Mammary epithelial cell (primary cell): ENCODE measurements at regions of chr3 and their contacts with region 1.

Region 1: DNA sequence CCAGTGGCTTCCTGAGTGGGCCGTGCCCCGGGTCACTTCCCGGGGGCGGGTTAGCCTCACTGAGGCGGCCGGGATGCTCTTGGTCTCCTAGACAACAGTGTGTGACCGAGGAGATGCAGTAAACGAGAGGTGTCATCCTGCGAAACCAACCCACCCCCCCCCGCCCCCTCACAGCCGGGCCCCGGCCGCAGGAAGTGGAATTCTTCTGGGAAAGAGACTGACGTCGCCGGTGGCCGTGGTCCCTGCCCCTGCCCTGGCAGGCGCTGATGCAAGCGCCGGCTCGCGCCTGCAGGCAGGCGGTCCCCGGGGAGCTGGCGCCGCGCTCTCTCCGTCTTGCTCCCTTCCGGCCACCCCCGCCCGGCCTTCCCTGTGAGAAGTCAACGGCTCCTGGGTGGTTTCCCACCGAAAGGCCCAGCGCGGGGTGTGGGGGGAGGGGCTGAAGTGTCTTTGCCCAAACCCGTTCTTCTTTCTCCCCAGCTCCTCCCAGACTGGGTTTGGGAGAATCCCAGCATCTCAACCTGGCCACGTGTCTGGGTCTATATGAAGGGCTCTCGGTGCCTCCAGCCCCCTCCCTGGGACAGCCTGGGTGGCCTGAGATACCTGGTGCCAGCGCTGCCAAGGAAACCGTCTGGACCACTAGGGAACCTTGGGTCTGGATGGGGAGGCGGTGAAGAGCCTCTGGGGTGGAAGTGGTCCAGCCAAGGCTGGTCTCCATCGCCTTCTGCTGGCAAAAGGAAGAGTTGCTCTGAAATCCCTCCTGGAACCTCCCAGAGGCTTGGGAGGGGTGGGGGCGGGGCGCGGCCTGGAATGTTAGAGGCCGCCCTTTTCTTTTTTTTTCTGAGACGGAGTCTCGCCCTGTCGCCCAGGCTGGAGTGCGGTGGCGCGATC is 47.3 kb downstream of the BHLHE40 start:
- DNase-seq: peak; percentile 98
- H3K4me3 ChIP-seq: peak overlapping the region; percentile 23 to 44 (median 24)
- H3K27ac ChIP-seq: peak overlapping the region; percentile 100
- H3K4me1 ChIP-seq: peaks cover 34% of the 10 kb centered on the region
- H3K27me3 ChIP-seq: no peaks in the 10 kb centered on the region
- CTCF ChIP-seq: peak; percentile 55 to 81

Region 2: GRCh38 chr3:4656059-4656458 is 370.5 kb before region 1 on chr3:
- CTCF ChIA-PET with region 1: no interaction called
- dilution Hi-C with region 1: no loop called
- in situ Hi-C with region 1: no loop called
- intact Hi-C with region 1: loop called (anchors 1 kb)
- DNase-seq: peak; percentile 40
- H3K4me3 ChIP-seq: no peak overlapping the region
- H3K27ac ChIP-seq: no peak overlapping the region
- H3K4me1 ChIP-seq: peaks cover under 1% of the 10 kb centered on the region
- H3K27me3 ChIP-seq: no peaks in the 10 kb centered on the region
- CTCF ChIP-seq: peak; percentile 93 to 95

Region 3: GRCh38 chr3:4722103-4722502 is 304.5 kb before region 1 on chr3:
- CTCF ChIA-PET with region 1: interaction called, 7 read pairs
- dilution Hi-C with region 1: no loop called
- in situ Hi-C with region 1: loop called in 1 of 2 experiments (anchors 10 kb)
- intact Hi-C with region 1: loop called (anchors 1 kb)
- DNase-seq: peak; percentile 81
- H3K4me3 ChIP-seq: no peak overlapping the region
- H3K27ac ChIP-seq: peak overlapping the region; percentile 71
- H3K4me1 ChIP-seq: peaks cover 32% of the 10 kb centered on the region
- H3K27me3 ChIP-seq: no peaks in the 10 kb centered on the region
- CTCF ChIP-seq: peak; percentile 37 to 61

Region 4: DNA sequence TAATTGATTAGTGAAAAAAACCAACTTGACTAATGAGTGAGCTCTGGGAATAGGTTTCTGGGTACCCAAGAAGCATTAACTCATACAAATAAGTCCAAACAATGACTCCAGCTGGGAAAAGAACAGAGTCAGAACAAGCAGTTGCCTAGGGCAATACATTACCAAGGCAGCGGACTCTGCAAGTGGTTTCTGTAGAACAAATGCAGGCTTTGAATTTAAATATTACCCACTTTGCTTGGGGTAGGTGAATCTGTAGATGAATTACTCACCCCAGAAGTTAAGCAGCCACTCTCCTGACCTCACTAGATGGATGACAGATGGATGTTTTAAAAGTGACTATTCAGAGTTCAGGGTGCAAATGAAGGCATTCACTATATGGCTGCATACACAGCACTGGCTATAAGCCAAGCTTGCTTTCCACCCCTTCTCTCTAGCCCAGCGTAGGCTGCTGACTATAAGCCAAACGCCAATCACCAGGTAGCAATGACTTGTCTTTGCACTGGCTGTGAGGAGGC is 120.4 kb before region 1 on chr3:
- CTCF ChIA-PET with region 1: no interaction called
- dilution Hi-C with region 1: no loop called
- in situ Hi-C with region 1: no loop called
- intact Hi-C with region 1: loop called (anchors 5 kb)
- DNase-seq: peak; percentile 98
- H3K4me3 ChIP-seq: no peak overlapping the region
- H3K27ac ChIP-seq: peak overlapping the region; percentile 82
- H3K4me1 ChIP-seq: peaks cover 21% of the 10 kb centered on the region
- H3K27me3 ChIP-seq: no peaks in the 10 kb centered on the region
- CTCF ChIP-seq: no peak

Region 5: GRCh38 chr3:4994823-4995499 is 31.6 kb before region 1 on chr3:
- CTCF ChIA-PET with region 1: no interaction called
- dilution Hi-C with region 1: no loop called
- in situ Hi-C with region 1: no loop called
- intact Hi-C with region 1: loop called (anchors 1 kb)
- DNase-seq: peak; percentile 99
- H3K4me3 ChIP-seq: no peak overlapping the region
- H3K27ac ChIP-seq: peak overlapping the region; percentile 98
- H3K4me1 ChIP-seq: peaks cover 42% of the 10 kb centered on the region
- H3K27me3 ChIP-seq: no peaks in the 10 kb centered on the region
- CTCF ChIP-seq: no peak

Region 6: DNA sequence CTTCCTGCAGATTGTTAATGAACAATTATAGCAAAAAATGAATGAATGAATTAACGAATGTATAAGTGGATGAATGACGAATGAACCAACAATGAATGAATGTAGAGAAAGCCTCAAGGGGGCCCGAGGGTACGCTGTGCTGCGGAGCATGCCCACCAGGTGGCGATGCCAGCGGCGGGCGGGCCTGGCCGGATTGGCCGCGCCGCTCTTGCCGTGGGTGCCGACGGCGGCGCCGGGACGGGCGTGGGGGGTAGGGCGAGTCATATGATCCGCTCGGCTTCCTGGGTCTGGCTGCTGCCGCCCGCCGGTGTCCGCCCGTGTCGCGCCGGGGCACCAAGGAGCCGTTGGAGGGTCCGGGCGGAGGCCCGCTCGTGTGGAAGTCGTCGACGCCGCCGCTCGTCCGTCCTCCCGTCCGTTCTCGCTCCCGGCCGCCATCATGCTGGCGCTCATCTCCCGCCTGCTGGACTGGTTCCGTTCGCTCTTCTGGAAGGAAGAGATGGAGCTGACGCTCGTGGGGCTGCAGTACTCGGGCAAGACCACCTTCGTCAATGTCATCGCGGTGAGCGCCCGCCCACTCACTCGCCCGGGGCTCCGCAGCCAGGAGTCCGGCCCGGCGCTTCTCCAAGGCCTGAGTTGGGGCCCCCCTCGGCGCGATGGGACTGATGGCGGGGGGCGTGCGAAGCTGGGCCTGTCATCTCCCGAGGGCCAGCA is 95.6 kb after region 1 on chr3 and contains the start of gene ARL8B:
- CTCF ChIA-PET with region 1: no interaction called
- dilution Hi-C with region 1: no loop called
- in situ Hi-C with region 1: no loop called
- intact Hi-C with region 1: loop called (anchors 1 kb)
- DNase-seq: peak; percentile 85
- H3K4me3 ChIP-seq: peak within 1 kb of the TSS; percentile 76 to 93 (median 93)
- H3K27ac ChIP-seq: peak within 1 kb of the TSS; percentile 89
- H3K4me1 ChIP-seq: peaks cover 23% of the 10 kb centered on the region
- H3K27me3 ChIP-seq: no peaks in the 10 kb centered on the region
- CTCF ChIP-seq: peak; percentile 94 to 95
- total RNA-seq, gene ARL8B: 60.7 to 77.8 TPM

Region 7: DNA sequence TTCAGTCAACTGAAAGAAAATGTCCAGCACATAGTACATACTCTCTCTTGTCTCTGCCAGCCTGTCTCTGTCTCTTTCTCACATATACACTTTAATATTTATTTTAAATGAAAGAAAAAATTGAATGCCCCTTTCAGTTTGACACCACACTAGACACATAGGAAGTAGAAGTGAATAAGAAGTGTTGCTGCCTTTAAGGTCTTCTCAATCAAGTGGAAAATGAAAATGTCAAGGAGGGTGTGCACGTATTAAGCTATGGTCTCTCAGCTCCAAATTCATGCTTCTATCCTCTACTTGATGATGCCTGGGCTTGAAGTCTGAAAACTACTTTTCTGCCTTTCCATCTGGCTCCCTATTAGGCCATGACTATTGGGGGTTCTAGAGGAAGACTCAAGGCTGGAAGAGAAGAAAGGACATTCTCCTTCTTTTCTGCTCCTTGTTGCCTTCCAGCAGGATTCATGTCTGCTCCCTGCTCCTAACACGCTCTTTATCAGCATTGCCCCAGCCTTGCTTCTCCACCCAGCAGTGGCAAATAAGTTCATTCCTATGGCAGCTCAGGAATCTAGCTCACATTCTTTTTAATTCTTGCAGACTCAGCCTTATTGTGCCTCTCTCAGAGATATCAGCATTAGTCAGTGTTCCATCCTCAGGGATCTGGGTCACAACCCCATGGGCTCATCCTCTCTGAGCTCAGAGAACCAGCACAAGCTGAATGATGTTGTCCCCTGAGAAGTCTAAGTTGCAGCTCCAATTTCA is 1225.2 kb after region 1 on chr3:
- CTCF ChIA-PET with region 1: interaction called, 20 read pairs
- dilution Hi-C with region 1: no loop called
- in situ Hi-C with region 1: no loop called
- intact Hi-C with region 1: no loop called
- DNase-seq: no peak
- H3K4me3 ChIP-seq: no peak overlapping the region
- H3K27ac ChIP-seq: no peak overlapping the region
- H3K4me1 ChIP-seq: no peaks in the 10 kb centered on the region
- H3K27me3 ChIP-seq: no peaks in the 10 kb centered on the region
- CTCF ChIP-seq: no peak